ENCODE measurements at regions of chr6 and their contacts with region 1.

Region 1: DNA sequence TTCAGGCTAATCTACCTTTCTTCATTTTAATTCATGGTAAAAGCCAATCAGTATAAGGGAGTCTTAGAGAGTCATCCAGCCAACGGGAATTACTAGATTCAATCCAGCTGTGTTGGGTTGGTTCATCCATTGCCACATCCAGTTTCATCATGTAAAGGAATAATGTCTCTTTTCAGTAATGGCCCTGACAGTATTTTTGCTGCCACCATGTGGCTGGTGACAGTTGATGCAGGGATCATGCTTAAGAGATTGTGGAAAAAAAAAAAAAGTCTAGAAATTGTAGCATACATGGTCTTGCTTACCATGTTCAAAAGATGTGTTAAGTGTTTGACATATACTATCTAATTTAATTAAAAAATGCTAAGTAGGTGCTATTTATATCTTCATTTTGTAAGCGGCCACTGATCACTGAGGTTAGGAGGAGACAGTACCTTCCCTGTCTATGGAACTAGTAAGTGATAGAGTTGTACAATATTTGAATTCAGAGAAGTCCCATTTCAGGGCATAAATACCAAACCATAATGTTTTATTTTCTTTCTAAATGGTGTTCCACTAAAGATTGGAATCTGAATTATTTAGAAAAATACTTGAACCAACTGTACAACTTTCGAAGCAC is 135.9 kb downstream of the KHDRBS2 start:
- DNase-seq: peak; percentile 21
- ATAC-seq: no peak
- H3K4me3 Mint-ChIP-seq: no peak overlapping the region
- H3K27ac Mint-ChIP-seq: no peak overlapping the region
- H3K4me1 Mint-ChIP-seq: no peaks in the 10 kb centered on the region
- H3K27me3 Mint-ChIP-seq: no peaks in the 10 kb centered on the region

Region 2: GRCh38 chr6:61809004-61809595 is 341.1 kb before region 1 on chr6:
- CTCF ChIA-PET with region 1: no interaction called
- POLR2A ChIA-PET with region 1: no interaction called
- intact Hi-C with region 1: loop called in 1 of 2 experiments (anchors 1 kb)
- DNase-seq: no peak
- ATAC-seq: no peak
- H3K4me3 Mint-ChIP-seq: no peak overlapping the region
- H3K27ac Mint-ChIP-seq: no peak overlapping the region
- H3K4me1 Mint-ChIP-seq: no peaks in the 10 kb centered on the region
- H3K27me3 Mint-ChIP-seq: no peaks in the 10 kb centered on the region